HEK293T (cell line): ENCODE measurements at regions of chrX and their contacts with region 1.

Region 1: DNA sequence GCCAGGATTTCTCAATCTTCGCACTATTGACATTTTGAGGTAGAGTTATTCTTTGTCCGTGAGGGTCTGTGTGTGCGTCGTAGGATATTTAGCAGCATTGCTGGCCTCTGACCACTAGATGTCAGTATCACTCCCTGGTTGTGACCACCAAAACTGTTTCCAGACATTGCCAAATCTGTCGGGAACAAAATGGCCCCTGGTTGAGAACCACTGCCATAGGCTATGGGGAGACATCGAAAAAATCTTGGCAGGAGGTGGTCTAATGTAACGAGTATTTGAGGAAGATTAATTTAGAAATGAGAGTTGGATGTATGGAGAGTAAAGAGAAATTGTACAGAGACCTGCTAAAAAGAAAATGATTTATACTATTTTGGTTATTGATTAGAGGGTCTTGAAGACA is 108.4 kb downstream of the DOCK11 start:
- DNase-seq: peak; percentile 77

Region 2: DNA sequence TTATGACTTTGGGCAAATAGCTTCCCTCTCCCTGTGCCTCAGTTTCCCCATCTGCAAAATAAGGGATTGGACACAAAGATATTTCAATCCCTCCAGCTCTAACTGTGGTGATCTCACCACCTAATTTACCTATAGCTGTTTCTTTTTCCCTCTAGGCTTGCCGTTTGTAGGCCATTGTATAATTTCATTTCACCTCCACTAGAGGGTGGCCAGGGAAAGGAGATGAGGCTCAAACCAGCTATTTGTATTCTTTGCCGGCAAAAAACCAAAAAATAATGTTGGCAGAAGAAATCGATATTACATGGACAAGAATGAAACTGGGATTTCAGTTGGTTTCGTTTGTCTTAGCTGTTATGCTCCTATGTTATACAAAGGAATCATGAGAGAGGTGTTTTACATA is 144.5 kb before region 1 on chrX:
- CTCF ChIA-PET with region 1: interaction called, 38 read pairs
- POLR2A ChIA-PET with region 1: interaction called, 5 read pairs
- DNase-seq: peak; percentile 63